AG04450 (cell line): ENCODE measurements at regions of chr3 and their contacts with region 1.

Region 1: DNA sequence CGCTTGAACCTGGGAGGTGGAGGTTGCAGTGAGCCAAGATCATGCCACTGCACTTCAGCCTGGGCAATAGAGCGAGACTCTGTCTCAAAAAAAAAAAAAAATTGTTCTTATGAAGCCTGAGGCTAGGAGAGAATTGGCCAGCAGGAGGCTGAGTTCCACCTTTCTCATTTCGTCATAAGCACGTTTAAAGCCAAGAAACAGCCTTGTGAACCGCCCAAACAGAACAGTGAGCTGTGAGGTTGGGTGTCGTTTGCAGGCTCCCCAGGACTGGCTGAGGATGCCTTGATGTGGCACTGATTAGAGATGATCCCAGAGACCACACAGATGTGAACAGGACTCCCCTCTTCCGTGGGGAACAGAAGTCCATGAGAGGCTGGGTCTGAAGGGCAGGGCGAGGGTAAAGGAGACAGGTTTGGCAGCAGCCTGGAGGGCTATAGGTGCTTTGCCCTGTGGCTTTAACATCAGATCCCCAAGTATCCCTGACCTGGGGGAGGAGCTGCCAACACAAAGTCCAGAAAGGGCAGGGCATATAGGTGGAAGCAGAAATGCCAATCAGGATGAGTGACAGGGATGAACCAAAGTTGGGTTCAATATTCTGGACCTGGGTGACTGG is 52.9 kb downstream of the CLEC3B start:
- DNase-seq: no peak
- H3K4me3 ChIP-seq: no peak overlapping the region
- H3K27ac ChIP-seq: no peak overlapping the region
- H3K27me3 ChIP-seq: no peaks in the 10 kb centered on the region
- CTCF ChIP-seq: peak; percentile 39

Region 2: DNA sequence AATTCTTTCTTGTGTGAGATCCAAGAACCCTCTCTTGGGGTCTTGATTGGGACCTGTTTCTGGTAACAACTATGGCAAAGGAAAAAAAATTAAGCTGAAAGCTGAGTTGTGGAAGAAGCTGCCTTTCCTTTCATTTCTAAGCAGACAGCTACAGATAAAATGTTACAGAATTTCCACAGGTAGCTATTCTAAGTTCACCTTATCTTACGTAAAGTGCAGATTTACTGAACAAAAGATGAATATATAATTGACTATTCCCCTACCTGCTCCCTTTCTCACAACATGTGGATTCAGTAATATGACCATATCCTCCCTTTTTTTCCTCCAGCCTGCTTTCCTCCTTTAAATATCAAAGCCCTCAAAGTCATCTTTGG is 16.3 kb before region 1 on chr3:
- CTCF ChIA-PET with region 1: no interaction called
- POLR2A ChIA-PET with region 1: interaction called, 12 read pairs
- DNase-seq: no peak
- H3K4me3 ChIP-seq: no peak overlapping the region
- H3K27ac ChIP-seq: peak overlapping the region; percentile 71
- H3K27me3 ChIP-seq: no peaks in the 10 kb centered on the region
- CTCF ChIP-seq: no peak